ENCODE measurements at regions of chr7 and their contacts with region 1.

Region 1: DNA sequence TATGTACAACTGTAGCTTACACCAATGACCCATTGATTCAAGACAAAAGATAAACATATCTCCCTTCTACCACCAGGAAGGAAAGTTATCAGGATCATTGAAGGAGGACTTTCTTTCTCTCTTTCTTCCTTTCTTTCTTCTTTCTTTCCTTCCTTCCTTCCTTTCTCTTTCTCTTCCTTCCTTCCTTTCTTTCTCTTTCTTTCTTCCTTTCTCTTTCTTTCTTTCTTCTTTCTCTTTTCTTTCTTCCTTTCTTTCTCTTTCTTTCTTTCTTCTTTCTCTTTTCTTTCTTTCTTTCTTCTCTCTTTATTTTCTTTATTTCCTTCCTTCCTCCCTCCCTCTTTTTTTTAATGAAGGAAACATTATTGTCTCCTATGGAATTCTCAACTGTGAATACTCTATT is 10.6 kb upstream of the OR2A2 start:
- DNase-seq: no peak
- ATAC-seq: no peak
- H3K4me3 ChIP-seq: no peak overlapping the region
- H3K4me3 Mint-ChIP-seq: no peak overlapping the region
- H3K27ac ChIP-seq: no peak overlapping the region
- H3K27ac Mint-ChIP-seq: no peak overlapping the region
- H3K4me1 ChIP-seq: no peaks in the 10 kb centered on the region
- H3K4me1 Mint-ChIP-seq: peaks cover 11% of the 10 kb centered on the region
- H3K27me3 ChIP-seq: no peaks in the 10 kb centered on the region
- H3K27me3 Mint-ChIP-seq: peaks cover 13% of the 10 kb centered on the region
- CTCF ChIP-seq: peak; percentile 14

Region 2: GRCh38 chr7:143948733-143949132 is 150.0 kb before region 1 on chr7:
- CTCF ChIA-PET with region 1: no interaction called
- POLR2A ChIA-PET with region 1: no interaction called
- intact Hi-C with region 1: loop called in 1 of 2 experiments (anchors 10 kb)
- DNase-seq: no peak
- ATAC-seq: no peak
- H3K4me3 ChIP-seq: no peak overlapping the region
- H3K4me3 Mint-ChIP-seq: no peak overlapping the region
- H3K27ac ChIP-seq: no peak overlapping the region
- H3K27ac Mint-ChIP-seq: no peak overlapping the region
- H3K4me1 ChIP-seq: no peaks in the 10 kb centered on the region
- H3K4me1 Mint-ChIP-seq: no peaks in the 10 kb centered on the region
- H3K27me3 ChIP-seq: peaks cover 2 to 11% of the 10 kb centered on the region in 2 experiments
- H3K27me3 Mint-ChIP-seq: peaks cover 57% of the 10 kb centered on the region
- CTCF ChIP-seq: no peak

Region 3: GRCh38 chr7:145919712-145920111 is 1820.9 kb after region 1 on chr7:
- CTCF ChIA-PET with region 1: no interaction called
- POLR2A ChIA-PET with region 1: no interaction called
- intact Hi-C with region 1: no loop called
- DNase-seq: no peak
- ATAC-seq: no peak
- H3K4me3 ChIP-seq: no peak overlapping the region
- H3K4me3 Mint-ChIP-seq: no peak overlapping the region
- H3K27ac ChIP-seq: no peak overlapping the region
- H3K27ac Mint-ChIP-seq: no peak overlapping the region
- H3K4me1 ChIP-seq: no peaks in the 10 kb centered on the region
- H3K4me1 Mint-ChIP-seq: no peaks in the 10 kb centered on the region
- H3K27me3 ChIP-seq: no peaks in the 10 kb centered on the region
- H3K27me3 Mint-ChIP-seq: no peaks in the 10 kb centered on the region
- CTCF ChIP-seq: no peak

Measured in CD4-positive, alpha-beta T cell (primary cell).